ENCODE measurements at regions of chr9 and their contacts with region 1.

Region 1: GRCh38 chr9:76441551-76442322 is 17.2 kb upstream of the GCNT1 start:
- DNase-seq: peak; percentile 82
- H3K4me3 ChIP-seq: no peak overlapping the region
- H3K27ac ChIP-seq: peak overlapping the region; percentile 31; the same call in 1 of the 2 replicates
- H3K4me1 ChIP-seq: peaks cover 12% of the 10 kb centered on the region
- H3K27me3 ChIP-seq: no peaks in the 10 kb centered on the region

Region 2: DNA sequence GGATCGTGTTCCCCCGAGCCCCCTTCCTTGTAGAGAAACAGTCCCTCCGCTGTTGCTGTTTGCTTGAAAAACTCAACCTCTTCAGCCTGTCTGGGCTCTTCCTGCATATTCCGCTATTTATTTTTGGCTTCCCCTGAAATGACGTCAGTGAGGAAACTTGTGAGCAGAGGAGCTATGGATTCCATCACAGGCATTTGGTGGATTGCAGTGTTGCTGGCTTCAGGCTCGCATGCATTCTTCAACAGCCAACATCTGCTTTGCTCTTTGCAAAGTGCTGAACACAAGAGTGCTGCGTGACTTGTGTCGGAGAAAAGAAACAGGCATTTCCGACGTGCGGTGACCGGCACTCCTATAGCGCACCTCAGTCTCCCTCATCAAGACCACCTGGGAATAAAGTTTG is 280.2 kb before region 1 on chr9:
- in situ Hi-C with region 1: no loop called
- DNase-seq: peak; percentile 81
- H3K4me3 ChIP-seq: peak overlapping the region; percentile 41
- H3K27ac ChIP-seq: no peak overlapping the region
- H3K4me1 ChIP-seq: peaks cover 14% of the 10 kb centered on the region
- H3K27me3 ChIP-seq: no peaks in the 10 kb centered on the region

Region 3: DNA sequence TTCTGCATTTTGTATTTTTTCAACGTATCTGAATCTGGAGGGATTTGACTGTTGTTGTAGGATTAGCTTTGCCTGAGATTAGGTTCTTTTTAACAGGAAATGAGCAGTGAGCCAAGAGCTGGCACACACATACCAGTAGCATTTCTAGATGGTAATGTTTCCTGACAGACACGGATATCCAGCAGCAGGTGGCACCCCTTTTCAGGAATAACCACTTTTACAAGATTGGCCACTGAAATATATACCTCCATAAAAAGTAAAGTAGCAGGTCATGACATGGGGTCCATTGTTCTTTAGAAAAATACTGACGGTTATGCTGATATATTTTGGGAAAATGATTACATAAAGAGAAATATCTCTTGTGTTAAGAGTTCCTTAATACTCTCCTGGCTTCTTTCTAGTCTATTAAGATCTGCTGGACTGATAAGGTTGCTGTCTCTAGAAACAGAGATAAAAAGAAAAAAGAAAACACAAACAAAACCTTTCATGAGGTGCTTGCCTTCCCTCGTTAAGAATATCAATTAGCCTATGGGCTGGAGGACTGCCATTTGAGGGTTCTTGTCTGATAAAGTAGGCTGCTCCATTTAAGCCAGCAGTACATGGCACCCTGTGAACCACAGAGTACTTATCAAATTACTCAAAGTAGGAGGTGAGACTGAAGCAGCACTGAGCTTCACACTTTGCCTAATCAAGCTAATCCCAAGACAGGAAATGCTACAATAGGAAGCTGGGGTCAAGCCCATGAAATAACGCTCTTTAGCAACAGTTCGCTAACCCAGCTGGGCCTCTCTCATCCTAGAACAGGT is 220.9 kb after region 1 on chr9:
- in situ Hi-C with region 1: loop called (anchors 5 kb)
- DNase-seq: no peak
- H3K4me3 ChIP-seq: no peak overlapping the region
- H3K27ac ChIP-seq: no peak overlapping the region
- H3K4me1 ChIP-seq: peaks cover 17% of the 10 kb centered on the region
- H3K27me3 ChIP-seq: no peaks in the 10 kb centered on the region

Region 4: DNA sequence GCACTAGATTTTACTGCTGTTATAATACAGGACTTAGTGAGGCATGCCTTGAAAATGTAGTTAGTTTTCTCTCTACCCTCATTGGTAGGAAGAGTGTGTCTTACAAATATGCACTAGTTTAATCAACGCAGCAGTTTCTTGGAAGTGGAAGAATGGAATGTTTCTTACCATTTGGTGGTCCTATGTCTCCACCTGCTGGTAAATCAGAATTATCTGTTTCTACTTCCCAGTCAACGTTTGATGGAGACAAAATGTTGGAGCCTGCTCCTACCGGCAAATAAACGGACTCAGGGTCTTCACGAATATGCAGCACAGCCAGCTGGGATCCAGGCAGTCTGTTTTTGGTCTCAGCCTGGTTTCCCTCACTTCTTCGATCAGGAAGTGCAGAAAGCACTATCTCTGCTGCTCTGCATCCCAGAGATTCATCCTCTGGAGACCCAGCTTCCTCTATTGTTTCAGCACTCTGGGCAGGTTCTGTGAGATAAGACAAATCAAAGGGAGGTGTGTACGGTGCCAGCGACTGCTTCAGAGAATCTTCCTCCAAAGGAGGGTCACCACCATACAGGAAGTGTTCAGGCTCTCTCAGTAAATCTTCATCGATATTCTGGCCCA is 263.0 kb after region 1 on chr9:
- in situ Hi-C with region 1: loop called (anchors 10 kb)
- DNase-seq: peak; percentile 85
- H3K4me3 ChIP-seq: no peak overlapping the region
- H3K27ac ChIP-seq: no peak overlapping the region
- H3K4me1 ChIP-seq: peaks cover 21% of the 10 kb centered on the region
- H3K27me3 ChIP-seq: peaks cover 23% of the 10 kb centered on the region; the same call in 1 of the 2 replicates

Region 5: GRCh38 chr9:76887003-76887821 is 445.5 kb after region 1 on chr9:
- in situ Hi-C with region 1: loop called (anchors 25 kb)
- DNase-seq: peak; percentile 24
- H3K4me3 ChIP-seq: peak overlapping the region; percentile 44; the same call in 1 of the 2 replicates
- H3K27ac ChIP-seq: no peak overlapping the region
- H3K4me1 ChIP-seq: no peaks in the 10 kb centered on the region
- H3K27me3 ChIP-seq: no peaks in the 10 kb centered on the region

Measured in GM23248 (cell line).